Panc1 (cell line): ENCODE measurements at regions of chr19 and their contacts with region 1.

Region 1: GRCh38 chr19:40055832-40056504 is at the start of gene ZNF780B:
- DNase-seq: peak; percentile 100
- ATAC-seq: peak; percentile 99
- H3K4me3 ChIP-seq: peak within 1 kb of the TSS; percentile 36 to 50
- H3K27ac ChIP-seq: peak within 1 kb of the TSS; percentile 78
- H3K4me1 ChIP-seq: peaks cover 16% of the 10 kb centered on the region
- H3K27me3 ChIP-seq: no peaks in the 10 kb centered on the region
- CTCF ChIP-seq: no peak
- total RNA-seq, gene ZNF780B: 237 TPM

Region 2: DNA sequence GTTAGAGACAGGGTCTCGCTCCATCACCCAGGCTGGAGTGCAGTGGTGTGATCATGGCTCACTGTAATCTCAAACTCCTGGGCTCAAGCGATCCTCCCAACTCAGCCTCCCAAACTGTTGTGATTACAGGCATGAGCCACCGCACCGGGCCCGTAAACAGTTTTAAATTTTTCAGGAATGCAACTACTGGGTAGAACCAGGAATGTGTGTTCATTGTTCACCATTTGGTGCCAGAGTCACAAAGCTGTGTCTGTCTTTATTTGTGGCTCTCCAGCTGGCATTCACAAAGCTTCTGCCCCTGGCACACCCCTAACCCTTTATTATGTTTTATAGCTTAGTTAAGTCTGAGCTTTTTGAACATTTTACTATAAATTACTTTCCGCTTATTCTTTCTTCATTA is 991.6 kb before region 1 on chr19:
- CTCF ChIA-PET with region 1: interaction called, 5 read pairs
- POLR2A ChIA-PET with region 1: no interaction called
- in situ Hi-C with region 1: loop called (anchors 10 kb)
- intact Hi-C with region 1: no loop called
- DNase-seq: no peak
- ATAC-seq: peak; percentile 6; the same call in 1 of the 2 replicates
- H3K4me3 ChIP-seq: no peak overlapping the region
- H3K27ac ChIP-seq: peak overlapping the region; percentile 40
- H3K4me1 ChIP-seq: peaks cover 10% of the 10 kb centered on the region
- H3K27me3 ChIP-seq: no peaks in the 10 kb centered on the region
- CTCF ChIP-seq: no peak

Region 3: DNA sequence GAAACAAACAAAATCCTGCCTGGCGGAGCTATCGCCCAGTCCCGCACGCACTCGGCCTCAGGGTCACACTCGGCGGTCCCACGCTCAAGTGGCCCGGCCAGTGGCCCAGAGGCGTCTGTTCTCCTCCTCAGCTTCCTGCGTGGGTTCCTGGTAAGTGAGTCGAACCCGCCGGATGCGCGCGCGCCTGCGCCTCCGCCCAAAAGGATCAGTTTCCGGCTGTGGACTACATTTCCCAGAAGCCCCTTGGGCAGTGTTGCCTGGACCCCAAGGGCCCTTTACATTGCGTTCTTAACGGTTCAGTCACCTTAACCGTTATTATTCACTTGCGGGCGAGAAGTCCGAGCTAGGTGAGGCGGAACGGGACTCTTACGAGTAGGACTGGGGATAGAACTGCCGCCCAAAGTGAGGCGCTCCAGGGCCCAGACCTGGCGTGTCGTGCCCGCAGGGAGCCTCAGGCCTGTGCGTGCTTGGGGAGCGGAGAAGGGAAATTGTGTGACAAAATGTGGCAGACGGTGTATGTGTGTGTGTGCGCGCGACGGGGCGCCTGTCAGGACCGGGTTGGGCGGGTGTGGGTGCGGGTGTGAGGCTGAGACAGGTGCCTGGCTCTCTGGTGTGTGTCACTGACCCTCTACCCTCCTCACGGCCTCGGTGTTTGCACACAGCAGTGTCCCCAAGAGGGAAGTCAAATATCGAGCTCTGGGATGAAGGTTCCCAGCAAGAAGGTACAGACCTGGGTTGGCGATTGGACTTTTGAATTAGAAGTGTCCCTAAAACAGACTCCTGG is 59.0 kb before region 1 on chr19 and contains the start of gene ZNF546:
- CTCF ChIA-PET with region 1: interaction called, 3 read pairs
- POLR2A ChIA-PET with region 1: interaction called, 9 read pairs
- in situ Hi-C with region 1: loop called (anchors 5 kb)
- intact Hi-C with region 1: no loop called
- DNase-seq: peak; percentile 100
- ATAC-seq: peak; percentile 98
- H3K4me3 ChIP-seq: peak within 1 kb of the TSS; percentile 35 to 49
- H3K27ac ChIP-seq: peak within 1 kb of the TSS; percentile 83
- H3K4me1 ChIP-seq: peaks cover 19% of the 10 kb centered on the region
- H3K27me3 ChIP-seq: no peaks in the 10 kb centered on the region
- CTCF ChIP-seq: no peak
- total RNA-seq, gene ZNF546: 68.4 TPM

Region 4: GRCh38 chr19:40006273-40006691 is 49.7 kb before region 1 on chr19:
- CTCF ChIA-PET with region 1: interaction called, 3 read pairs
- POLR2A ChIA-PET with region 1: interaction called, 10 read pairs
- in situ Hi-C with region 1: loop called (anchors 5 kb)
- intact Hi-C with region 1: no loop called
- DNase-seq: peak; percentile 100
- ATAC-seq: peak; percentile 91
- H3K4me3 ChIP-seq: no peak overlapping the region
- H3K27ac ChIP-seq: no peak overlapping the region
- H3K4me1 ChIP-seq: peaks cover 8% of the 10 kb centered on the region; the same call in 1 of the 2 replicates
- H3K27me3 ChIP-seq: no peaks in the 10 kb centered on the region
- CTCF ChIP-seq: no peak